PC-9 (cell line): ENCODE measurements at regions of chr4 and their contacts with region 1.

Region 1: DNA sequence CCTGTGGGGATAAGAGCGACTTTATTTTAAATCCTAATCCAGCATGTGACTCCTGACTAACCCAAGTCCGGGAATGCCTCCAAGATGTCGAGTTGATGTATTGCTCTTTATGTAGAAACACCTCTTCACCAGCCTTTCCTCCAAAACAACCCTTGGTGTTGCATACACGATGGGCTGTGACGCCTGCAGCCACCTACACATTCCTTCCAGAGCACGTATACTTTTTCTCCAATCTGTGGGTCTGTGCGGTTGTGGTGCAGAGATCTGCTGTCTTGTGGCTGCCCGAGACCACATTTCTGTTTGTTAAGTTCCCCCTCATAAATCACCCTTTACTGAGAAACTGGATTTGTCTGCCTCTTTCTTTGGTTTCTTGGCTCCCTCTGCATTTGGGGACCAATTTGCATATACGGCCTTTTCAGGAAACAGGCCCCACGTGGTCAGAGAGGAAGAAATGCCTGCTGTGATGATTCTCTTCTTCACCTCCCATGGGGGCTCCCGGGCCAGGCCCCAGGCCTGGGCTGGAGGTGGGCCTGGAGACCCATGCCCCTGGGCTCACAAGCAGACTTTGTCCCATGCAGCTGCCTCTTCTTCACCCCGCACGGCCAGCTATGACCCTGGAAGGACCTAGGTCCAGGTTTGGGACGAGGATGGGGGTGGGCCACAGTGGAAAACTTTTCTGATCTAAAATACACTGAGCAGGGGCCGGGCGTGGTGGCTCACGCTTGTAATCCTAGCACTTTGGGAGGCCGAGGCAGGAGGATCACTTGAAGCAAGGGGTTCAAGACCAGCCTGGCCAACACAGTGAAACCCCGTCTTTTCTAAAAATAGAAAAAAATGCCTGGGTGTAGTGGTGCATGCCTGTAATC is 21.4 kb upstream of the AFAP1 start:
- DNase-seq: peak; percentile 75 to 96
- H3K4me3 ChIP-seq: no peak overlapping the region; the same call in 1 of the 2 replicates
- H3K27ac ChIP-seq: peak overlapping the region; percentile 75
- H3K4me1 ChIP-seq: peaks cover 94% of the 10 kb centered on the region
- H3K27me3 ChIP-seq: no peaks in the 10 kb centered on the region
- CTCF ChIP-seq: no peak

Region 2: DNA sequence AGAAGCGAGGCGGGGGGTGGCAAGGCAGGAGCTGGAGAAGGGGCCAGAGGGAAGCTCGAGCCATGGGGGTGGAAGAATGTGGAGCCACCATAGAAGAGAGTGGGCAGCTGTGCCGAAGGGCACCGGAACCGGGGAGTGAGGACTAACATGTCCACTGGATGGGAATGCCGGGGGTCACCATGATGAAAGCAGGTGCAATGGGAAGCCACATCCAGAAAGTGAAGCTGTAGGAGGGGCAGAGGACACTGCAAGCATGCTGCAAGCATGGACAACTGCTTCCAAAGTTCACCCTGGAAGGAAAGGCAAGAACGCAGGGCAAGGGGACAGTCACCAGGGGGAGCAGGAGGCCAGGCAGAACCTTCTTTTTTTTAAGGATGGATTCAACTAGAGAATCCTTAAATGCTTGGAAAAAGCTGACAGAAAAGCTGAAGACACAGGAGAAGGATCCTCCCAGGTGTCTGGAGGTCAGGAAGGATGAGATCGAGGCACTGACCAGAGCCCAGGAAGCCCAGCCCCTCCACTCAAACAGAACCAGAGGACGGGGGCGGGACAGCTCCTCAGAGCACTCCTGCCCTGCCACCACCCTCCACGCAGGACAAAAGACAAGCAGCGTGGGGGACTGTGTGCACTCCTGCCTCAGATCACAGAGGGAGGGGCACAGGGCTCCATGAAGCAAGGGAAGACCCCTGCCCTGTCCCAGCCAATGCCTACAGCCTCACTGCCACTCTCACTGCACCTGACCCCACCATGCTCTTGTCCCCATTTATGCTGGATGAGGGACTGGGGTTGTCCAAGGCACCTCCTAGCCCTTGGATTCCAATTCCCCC is 190.6 kb before region 1 on chr4:
- CTCF ChIA-PET with region 1: no interaction called
- POLR2A ChIA-PET with region 1: interaction called, 13 read pairs
- intact Hi-C with region 1: no loop called
- DNase-seq: no peak
- H3K4me3 ChIP-seq: no peak overlapping the region
- H3K27ac ChIP-seq: no peak overlapping the region
- H3K4me1 ChIP-seq: no peaks in the 10 kb centered on the region
- H3K27me3 ChIP-seq: no peaks in the 10 kb centered on the region
- CTCF ChIP-seq: peak; percentile 47; the same call in 1 of the 2 replicates

Region 3: DNA sequence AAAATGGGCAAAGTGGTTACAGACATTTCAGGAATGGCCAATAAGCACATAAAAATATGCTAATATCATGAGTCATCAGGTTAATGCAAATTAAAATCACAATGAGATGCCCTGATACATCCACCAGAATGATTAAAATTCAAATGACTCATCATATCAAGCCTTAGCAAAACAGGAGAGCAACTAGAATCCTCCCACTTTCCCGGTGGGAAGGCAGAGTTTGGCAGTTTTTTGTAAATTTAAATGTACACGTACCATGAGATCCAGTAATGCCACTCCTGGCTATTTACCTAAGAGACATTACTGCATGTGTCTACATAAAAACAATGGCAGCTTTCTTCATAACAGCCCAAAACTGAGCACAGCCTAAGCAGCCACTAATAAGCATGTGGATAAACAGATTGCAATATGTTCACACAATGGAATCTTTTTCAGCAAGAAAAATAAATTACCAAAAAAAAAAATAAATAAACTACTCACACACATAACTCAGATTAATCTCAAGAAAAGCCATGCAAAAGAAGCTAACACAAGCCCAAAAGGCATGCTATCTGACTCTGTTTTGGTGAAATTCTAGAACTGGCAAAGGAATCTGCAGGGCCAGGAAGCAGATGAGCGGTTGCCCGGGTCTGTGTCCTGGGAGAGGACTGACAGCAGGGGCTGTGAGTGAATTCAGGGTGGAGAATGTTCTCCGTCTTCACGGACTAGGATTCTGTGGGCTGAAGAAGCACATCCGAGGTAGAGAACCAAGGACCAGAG is 70.2 kb before region 1 on chr4:
- CTCF ChIA-PET with region 1: no interaction called
- POLR2A ChIA-PET with region 1: interaction called, 15 read pairs
- intact Hi-C with region 1: no loop called
- DNase-seq: no peak
- H3K4me3 ChIP-seq: no peak overlapping the region
- H3K27ac ChIP-seq: peak overlapping the region; percentile 19; the same call in 1 of the 2 replicates
- H3K4me1 ChIP-seq: peaks cover 9% of the 10 kb centered on the region
- H3K27me3 ChIP-seq: no peaks in the 10 kb centered on the region
- CTCF ChIP-seq: no peak

Region 4: DNA sequence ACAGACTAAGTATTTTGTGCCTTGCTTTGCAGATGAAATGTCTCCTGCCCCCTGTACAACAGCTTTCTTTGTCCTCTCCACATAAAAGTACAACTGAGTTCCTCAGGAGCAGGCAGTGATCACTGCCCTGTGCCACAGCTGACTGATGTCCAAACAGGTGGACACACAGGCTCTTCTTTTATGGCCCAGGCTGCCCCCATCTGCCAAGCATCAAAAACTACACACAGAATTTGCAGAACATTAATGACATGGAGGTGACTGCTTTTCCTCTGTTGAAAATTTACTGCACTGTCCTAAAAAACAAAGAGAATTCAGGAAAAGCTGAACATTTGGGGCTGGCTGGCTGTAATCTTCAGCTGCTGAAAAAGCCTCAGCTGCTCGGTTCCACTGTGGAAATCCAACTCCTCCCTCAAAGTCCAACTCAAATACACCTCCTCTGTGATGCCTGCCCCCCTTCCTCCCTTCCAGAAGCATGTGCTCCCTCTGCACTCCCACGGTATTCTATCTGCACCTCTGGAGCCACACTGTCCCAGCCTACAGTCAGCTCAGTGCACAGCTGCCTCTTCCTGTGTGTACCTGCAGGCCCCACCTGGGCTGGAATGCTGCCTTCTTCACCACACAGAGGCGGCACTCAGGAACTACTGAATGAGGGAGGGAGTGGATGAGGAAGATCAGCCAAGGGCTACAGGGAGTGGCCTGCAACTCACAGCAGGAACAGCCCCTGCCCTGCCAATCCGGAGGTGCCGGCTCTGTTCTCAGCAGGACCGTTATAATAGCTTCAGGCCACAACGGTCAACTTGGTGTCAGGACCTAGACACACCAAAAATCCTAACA is 31.7 kb before region 1 on chr4:
- CTCF ChIA-PET with region 1: no interaction called
- POLR2A ChIA-PET with region 1: no interaction called
- intact Hi-C with region 1: loop called (anchors 2 kb)
- DNase-seq: peak; percentile 77 to 82
- H3K4me3 ChIP-seq: no peak overlapping the region
- H3K27ac ChIP-seq: no peak overlapping the region
- H3K4me1 ChIP-seq: peaks cover 31% of the 10 kb centered on the region
- H3K27me3 ChIP-seq: no peaks in the 10 kb centered on the region
- CTCF ChIP-seq: 0 out of 2 replicates have a peak, but pooled peaks have one; percentile 22

Region 5: DNA sequence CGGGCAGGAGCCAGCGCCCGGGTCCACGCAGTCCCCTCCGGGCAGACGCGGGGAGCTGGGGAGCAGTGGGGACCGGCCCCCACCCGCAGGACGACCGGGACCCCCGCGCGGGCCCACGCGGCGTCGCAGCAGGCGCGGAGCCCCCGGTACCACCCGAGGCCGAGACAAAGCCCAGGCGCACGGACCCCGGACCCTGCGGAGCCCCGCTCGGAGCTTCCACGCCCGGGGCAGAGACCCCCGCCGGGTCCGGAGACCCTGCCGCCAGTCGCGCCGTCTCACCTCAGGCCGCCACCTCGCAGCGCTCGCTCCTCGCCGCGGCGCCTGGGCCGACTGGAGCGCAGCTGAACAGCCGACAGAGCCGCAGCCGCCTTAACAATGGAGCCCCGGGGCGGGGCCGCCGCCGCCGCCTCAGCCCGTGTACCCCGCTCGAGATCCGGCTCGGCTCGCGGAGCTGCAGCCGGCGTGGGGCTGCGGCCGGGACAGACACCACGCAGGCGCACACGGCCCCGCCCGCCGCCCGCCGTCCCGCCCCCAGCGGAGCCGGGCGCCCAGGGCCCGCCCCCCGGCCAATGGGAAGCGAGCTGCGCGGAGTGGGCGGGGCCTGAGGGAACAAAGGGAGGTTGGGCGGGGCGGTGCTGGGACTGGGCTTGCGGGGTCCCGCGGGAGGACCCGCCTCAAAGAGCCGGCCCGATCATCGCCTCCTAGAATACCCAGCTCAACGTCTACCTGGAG is 21.5 kb before region 1 on chr4 and contains the start of gene AFAP1:
- CTCF ChIA-PET with region 1: interaction called, 4 read pairs
- POLR2A ChIA-PET with region 1: interaction called, 4 read pairs
- intact Hi-C with region 1: loop called (anchors 1 kb)
- DNase-seq: peak; percentile 49 to 88
- H3K4me3 ChIP-seq: peak within 1 kb of the TSS; percentile 85
- H3K27ac ChIP-seq: peak within 1 kb of the TSS; percentile 83
- H3K4me1 ChIP-seq: peaks cover 69% of the 10 kb centered on the region
- H3K27me3 ChIP-seq: no peaks in the 10 kb centered on the region
- CTCF ChIP-seq: no peak
- total RNA-seq, gene AFAP1: 69.6 and 84.1 TPM in 2 replicates

Region 6: DNA sequence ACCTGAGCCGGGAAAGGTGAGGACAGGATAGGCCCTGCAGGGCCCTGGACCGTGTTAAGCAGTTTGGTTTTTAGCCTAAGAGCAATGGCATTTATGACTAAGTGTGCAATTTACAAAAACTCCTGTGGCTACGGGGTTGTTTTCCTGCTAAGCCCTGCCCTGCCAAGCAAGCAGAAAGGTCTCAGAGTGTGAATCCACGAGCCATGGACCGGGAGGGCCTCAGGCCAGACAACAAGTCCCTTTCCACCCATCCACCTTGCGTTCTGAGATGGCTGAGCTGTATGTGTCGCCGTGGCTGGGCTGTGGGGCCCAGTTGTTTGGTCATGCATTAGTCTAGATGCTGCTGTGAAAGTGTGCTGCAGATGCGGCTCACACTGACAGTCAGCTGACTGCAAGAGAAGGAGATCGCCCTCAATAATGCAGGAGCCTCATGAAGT is 12.5 kb after region 1 on chr4:
- CTCF ChIA-PET with region 1: no interaction called
- POLR2A ChIA-PET with region 1: interaction called, 3 read pairs
- intact Hi-C with region 1: loop called (anchors 2 kb)
- DNase-seq: peak; percentile 51 to 87
- H3K4me3 ChIP-seq: no peak overlapping the region
- H3K27ac ChIP-seq: peak overlapping the region; percentile 94
- H3K4me1 ChIP-seq: peaks cover 82% of the 10 kb centered on the region
- H3K27me3 ChIP-seq: no peaks in the 10 kb centered on the region
- CTCF ChIP-seq: no peak

Region 7: DNA sequence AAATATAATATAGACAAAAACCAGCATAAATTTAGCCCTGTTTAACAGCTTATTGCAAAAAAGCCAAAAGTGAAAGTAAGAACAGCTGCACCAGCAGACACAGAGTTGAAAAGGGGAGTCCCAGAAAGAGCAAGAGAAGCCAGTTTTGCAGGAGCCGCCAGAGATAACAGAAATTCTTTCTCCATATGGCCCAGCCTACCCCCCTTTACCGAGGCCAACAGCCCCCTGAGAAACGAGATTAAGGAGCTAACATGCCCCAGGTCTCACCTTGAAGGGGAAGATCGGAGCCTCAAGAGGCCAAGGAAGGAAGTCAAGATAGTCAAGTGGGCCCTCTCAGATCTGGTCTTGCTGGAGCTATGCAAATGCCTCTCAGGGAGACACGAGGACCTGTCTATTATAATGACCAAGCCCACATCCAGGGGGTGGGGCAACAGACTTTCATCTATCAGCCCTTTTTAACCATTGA is 474.7 kb after region 1 on chr4:
- CTCF ChIA-PET with region 1: no interaction called
- POLR2A ChIA-PET with region 1: no interaction called
- intact Hi-C with region 1: no loop called
- DNase-seq: no peak
- H3K4me3 ChIP-seq: no peak overlapping the region
- H3K27ac ChIP-seq: no peak overlapping the region
- H3K4me1 ChIP-seq: no peaks in the 10 kb centered on the region
- H3K27me3 ChIP-seq: no peaks in the 10 kb centered on the region
- CTCF ChIP-seq: no peak